ENCODE measurements at regions of chr20 and their contacts with region 1.

Region 1: DNA sequence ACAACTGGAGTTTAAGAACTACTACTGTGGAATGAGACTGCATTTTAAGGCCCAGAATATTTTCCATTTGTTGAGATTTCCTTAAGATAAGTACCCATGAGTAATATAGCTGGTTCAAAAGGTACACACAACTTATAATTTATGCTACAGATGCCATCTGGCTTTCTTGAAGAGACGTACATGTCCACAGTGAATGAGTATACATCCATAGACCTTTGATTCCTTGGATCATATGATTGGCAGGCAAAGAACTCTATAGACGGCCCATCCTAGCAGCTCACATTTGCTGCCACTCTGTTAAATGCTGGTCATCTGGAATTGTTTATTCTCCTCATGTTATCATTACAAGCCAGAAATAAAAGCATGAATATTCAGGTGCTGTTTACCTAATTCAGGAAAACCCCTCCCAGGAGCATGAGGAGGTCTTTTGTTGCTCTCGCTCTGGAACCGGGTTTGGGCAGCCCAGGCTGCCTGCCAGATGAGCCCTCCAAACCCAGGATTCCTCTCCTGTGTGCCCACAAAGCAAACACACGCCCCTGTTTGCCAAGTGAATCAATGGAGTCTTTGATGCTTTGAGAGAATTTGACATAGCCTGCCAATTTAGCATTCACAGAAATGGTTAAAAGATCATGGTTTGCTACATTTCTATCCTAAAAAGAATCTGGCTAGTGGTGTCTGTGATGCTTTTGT is 17.7 kb upstream of the PLCG1 start:
- DNase-seq: no peak
- H3K4me3 ChIP-seq: no peak overlapping the region
- CTCF ChIP-seq: no peak

Region 2: GRCh38 chr20:41136680-41137613 is 17.3 kb after region 1 on chr20 and contains the start of gene PLCG1:
- CTCF ChIA-PET with region 1: interaction called, 15 read pairs
- POLR2A ChIA-PET with region 1: no interaction called
- DNase-seq: peak; percentile 9
- H3K4me3 ChIP-seq: peak within 1 kb of the TSS; percentile 75
- CTCF ChIP-seq: no peak

Region 3: DNA sequence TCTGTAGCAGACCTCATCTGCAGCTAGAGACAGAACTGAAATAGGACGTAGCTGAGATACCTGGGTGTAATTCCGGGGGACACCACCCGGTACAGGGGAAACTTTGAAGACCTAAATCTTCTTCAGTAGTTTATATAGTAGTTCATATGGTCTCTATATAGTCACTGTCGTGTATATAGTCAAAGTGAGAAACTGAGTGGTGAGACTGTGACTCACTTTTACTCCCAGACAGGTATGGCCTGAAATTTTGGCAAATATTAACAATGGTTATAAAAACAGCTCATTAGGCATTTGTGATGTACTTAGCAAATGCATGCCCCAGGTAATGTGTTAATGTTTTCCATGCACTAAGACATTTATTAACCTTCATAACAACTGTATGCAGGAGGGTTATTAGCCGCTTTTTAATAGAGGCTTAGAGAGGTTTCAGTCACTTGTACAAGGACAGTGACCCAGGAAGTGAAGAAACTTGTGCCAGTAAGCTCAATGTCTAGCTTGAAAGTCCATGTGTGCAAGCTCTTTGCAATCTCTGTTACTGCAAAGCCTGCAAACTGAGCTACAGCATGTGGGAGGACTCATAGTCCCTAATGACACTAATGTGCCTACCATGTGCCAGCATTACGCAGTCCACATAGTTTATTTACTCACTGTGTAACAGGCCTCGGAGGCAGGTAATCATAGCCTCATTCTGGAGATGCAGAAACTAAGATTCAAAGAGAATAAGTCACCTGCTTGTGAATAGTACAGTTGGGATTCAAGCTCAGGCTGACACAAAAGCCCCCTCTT is 663.9 kb after region 1 on chr20:
- CTCF ChIA-PET with region 1: no interaction called
- POLR2A ChIA-PET with region 1: no interaction called
- DNase-seq: no peak
- H3K4me3 ChIP-seq: no peak overlapping the region
- CTCF ChIP-seq: no peak